ENCODE measurements at regions of chr1 and their contacts with region 1.

Region 1: GRCh38 chr1:201436393-201436792 is 14.9 kb upstream of the TNNI1 start:
- DNase-seq: no peak
- H3K27ac ChIP-seq: no peak overlapping the region
- CTCF ChIP-seq: no peak

Region 2: DNA sequence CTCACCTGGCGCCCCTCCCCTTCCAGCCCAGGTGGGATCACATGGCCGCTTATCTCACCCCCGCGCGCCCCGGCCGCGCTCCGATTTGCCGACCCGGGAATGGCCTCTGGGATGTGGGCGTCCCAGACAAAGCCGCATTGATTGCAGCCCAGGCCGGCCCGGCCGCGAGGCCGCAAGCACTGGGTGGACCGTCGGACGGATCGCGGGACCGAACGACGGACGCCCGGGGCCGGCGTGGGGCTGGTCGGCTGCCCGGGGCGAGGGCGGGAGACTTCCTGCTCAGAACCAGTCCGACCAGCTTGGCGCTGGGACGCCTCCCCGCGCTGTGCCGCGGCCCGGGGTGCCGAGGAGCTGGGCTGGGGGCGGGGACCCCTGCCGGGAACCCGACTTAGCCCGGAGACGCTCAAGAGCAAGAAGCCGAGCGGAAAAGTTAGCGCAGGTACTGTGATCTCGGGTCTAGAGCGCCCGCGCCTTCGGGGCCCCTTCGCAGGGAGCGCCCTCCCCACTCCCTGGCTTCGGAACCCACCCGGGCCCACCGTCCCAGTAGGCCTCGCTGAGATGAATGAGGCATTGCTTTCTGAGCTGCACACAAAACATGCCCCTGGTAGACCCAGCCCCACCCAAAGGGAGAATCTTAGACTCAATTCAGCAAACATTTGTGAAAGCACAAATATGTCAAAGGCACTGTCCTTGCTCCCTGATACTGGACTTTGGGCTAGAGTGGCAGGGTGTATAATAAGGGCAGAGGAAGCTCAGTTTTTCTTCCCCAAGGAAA is 36.9 kb before region 1 on chr1:
- CTCF ChIA-PET with region 1: interaction called, 11 read pairs
- POLR2A ChIA-PET with region 1: no interaction called
- DNase-seq: peak; percentile 87
- H3K27ac ChIP-seq: peak overlapping the region; percentile 91
- CTCF ChIP-seq: no peak

Region 3: DNA sequence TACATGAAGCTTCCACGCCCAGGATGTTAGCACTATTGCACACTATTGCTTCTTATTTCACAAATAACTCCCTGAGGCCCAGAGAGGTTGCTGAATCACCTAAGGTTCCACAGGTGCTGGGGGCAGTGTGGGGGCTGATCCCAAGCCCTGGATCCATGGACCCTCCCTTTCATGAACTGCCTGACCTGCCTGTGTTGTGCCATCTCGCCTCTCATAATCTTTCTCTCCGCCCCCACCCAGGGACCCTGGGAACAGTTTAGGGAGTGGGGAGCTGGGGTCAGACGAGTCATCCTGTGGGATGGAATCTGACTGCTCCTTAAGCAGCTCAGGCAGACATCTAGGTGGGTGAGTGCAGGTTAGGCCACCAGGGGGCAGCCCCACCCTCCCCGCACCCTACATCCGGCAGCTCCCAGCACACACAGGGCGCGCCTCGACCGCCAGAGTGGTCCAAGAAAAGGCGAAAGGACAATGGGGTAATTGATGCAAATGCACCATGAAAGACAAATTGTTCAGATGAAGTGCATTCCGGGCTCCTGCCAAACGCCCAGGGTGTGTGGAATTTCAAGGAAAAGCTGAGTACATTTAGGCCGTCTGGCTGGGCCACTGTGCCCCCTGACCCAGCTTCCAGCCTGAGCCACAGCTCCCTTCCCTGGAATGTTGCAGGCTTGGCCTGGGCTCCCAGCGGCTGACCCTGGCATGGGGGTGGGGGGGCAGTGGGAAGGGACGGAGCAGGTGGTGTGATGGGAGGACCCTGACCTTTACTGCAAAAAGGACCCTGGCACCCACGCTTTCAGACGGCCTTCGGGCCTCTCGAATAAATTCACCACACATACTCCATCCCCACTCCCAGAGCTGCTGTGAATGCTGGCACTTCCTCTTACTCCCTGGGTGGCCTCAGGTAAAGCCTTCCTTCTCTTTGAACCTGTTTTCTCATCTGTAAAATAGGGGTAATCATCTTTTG is 11.8 kb after region 1 on chr1:
- CTCF ChIA-PET with region 1: interaction called, 57 read pairs
- POLR2A ChIA-PET with region 1: no interaction called
- DNase-seq: peak; percentile 91
- H3K27ac ChIP-seq: peak overlapping the region; percentile 58
- CTCF ChIP-seq: peak; percentile 90

Region 4: DNA sequence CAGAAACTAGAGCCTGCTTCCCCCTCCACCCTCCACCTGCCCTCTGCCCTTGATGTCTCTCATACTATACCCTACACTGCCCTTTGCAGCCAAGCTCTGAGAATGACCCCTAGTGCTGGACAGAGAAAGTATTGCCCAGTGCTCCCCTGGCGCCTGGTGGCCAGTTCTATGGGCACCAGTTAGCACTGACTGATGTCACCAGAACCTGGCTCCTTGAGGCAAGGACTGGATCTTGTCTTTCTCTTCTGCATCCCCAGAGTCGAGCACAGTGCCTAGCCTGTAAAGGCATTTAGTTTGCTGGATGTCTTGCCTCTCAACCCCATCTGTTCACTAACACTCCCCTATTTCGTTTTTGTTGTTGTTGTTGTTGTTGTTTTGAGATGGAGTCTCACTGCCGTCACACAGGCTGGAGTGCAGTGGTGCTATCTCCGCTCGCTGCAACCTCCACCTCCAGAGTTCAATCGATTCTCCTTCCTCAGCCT is 26.7 kb after region 1 on chr1:
- CTCF ChIA-PET with region 1: interaction called, 13 read pairs
- POLR2A ChIA-PET with region 1: interaction called, 10 read pairs
- DNase-seq: no peak
- H3K27ac ChIP-seq: peak overlapping the region; percentile 100
- CTCF ChIP-seq: no peak

Region 5: GRCh38 chr1:201468844-201469511 is 32.6 kb after region 1 on chr1 and contains the start of gene PHLDA3:
- CTCF ChIA-PET with region 1: interaction called, 13 read pairs
- POLR2A ChIA-PET with region 1: interaction called, 10 read pairs
- DNase-seq: peak; percentile 94
- H3K27ac ChIP-seq: peak within 1 kb of the TSS; percentile 100
- CTCF ChIP-seq: no peak

Measured in RWPE1 (cell line).